Activated CD4-positive, alpha-beta T cell treated with anti-CD3 and anti-CD28 coated beads for 36 hours (primary cell): ENCODE measurements at regions of chr9 and their contacts with region 1.

Region 1: GRCh38 chr9:34989003-34989945 is at the start of gene DNAJB5:
- DNase-seq: peak; percentile 98
- ATAC-seq: peak; percentile 88
- H3K4me3 Mint-ChIP-seq: peak within 1 kb of the TSS; percentile 78
- H3K27ac Mint-ChIP-seq: peak within 1 kb of the TSS; percentile 94
- H3K4me1 Mint-ChIP-seq: peaks cover 82% of the 10 kb centered on the region
- H3K27me3 Mint-ChIP-seq: no peaks in the 10 kb centered on the region
- total RNA-seq, gene DNAJB5: 10.3 to 11.3 TPM

Region 2: GRCh38 chr9:34611829-34612630 is 377.2 kb before region 1 on chr9 and contains the start of gene RPP25L:
- CTCF ChIA-PET with region 1: no interaction called
- POLR2A ChIA-PET with region 1: no interaction called
- intact Hi-C with region 1: loop called in 1 of 2 experiments (anchors 2 kb)
- DNase-seq: peak; percentile 91
- ATAC-seq: peak; percentile 97
- H3K4me3 Mint-ChIP-seq: peak within 1 kb of the TSS; percentile 86
- H3K27ac Mint-ChIP-seq: peak within 1 kb of the TSS; percentile 93
- H3K4me1 Mint-ChIP-seq: peaks cover 16% of the 10 kb centered on the region
- H3K27me3 Mint-ChIP-seq: no peaks in the 10 kb centered on the region
- total RNA-seq, gene RPP25L: 29.3 to 35.2 TPM

Region 3: GRCh38 chr9:34665381-34666250 is 323.7 kb before region 1 on chr9:
- CTCF ChIA-PET with region 1: interaction called, 3 read pairs
- POLR2A ChIA-PET with region 1: no interaction called
- intact Hi-C with region 1: loop called in 1 of 2 experiments (anchors 1 kb)
- DNase-seq: peak; percentile 93
- ATAC-seq: peak; percentile 75
- H3K4me3 Mint-ChIP-seq: peak overlapping the region; percentile 77
- H3K27ac Mint-ChIP-seq: peak overlapping the region; percentile 87
- H3K4me1 Mint-ChIP-seq: peaks cover 33% of the 10 kb centered on the region
- H3K27me3 Mint-ChIP-seq: no peaks in the 10 kb centered on the region

Region 4: GRCh38 chr9:34899535-34900158 is 89.6 kb before region 1 on chr9:
- CTCF ChIA-PET with region 1: interaction called, 43 read pairs
- POLR2A ChIA-PET with region 1: no interaction called
- intact Hi-C with region 1: loop called (anchors 1 kb)
- DNase-seq: peak; percentile 90
- ATAC-seq: peak; percentile 100
- H3K4me3 Mint-ChIP-seq: no peak overlapping the region
- H3K27ac Mint-ChIP-seq: no peak overlapping the region
- H3K4me1 Mint-ChIP-seq: no peaks in the 10 kb centered on the region
- H3K27me3 Mint-ChIP-seq: peaks cover 30% of the 10 kb centered on the region

Region 5: GRCh38 chr9:35071814-35072460 is 82.7 kb after region 1 on chr9:
- CTCF ChIA-PET with region 1: interaction called, 4 read pairs
- POLR2A ChIA-PET with region 1: no interaction called
- intact Hi-C with region 1: loop called (anchors 1 kb)
- DNase-seq: peak; percentile 83
- ATAC-seq: peak; percentile 47
- H3K4me3 Mint-ChIP-seq: peak overlapping the region; percentile 91
- H3K27ac Mint-ChIP-seq: peak overlapping the region; percentile 95
- H3K4me1 Mint-ChIP-seq: peaks cover 56% of the 10 kb centered on the region
- H3K27me3 Mint-ChIP-seq: no peaks in the 10 kb centered on the region

Region 6: DNA sequence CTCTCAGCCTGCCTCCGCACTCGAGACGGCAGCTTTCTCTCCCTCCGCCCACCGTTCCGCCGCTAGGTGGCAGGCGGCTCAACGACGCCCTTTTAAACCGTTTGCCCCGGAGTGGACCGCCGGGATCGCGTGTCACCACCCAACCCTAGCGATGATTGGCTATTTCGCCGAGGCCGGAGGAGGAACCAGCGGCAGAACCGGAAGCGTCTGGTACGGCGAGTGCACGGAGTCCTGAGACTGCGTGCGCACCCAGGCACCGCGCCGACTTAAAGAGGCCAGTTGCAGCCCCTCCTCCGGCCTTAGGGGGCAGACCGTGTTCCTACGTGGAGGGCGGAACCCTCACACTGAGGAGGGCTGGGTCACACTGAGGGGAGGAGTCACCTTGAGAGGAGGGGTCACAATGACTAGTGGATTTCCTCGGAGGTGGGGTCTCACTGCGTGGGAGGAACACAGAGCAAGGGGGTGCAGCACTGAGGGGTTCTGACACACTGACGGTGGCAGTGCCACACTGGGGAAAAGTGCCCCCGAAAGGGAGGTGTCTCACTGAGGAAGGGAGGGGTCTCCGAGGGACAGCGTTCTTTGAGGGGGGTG is 614.8 kb after region 1 on chr9:
- CTCF ChIA-PET with region 1: no interaction called
- POLR2A ChIA-PET with region 1: no interaction called
- intact Hi-C with region 1: loop called in 1 of 2 experiments (anchors 1 kb)
- DNase-seq: peak; percentile 100
- ATAC-seq: peak; percentile 93
- H3K4me3 Mint-ChIP-seq: peak overlapping the region; percentile 83
- H3K27ac Mint-ChIP-seq: peak overlapping the region; percentile 96
- H3K4me1 Mint-ChIP-seq: peaks cover 23% of the 10 kb centered on the region
- H3K27me3 Mint-ChIP-seq: no peaks in the 10 kb centered on the region

Region 7: DNA sequence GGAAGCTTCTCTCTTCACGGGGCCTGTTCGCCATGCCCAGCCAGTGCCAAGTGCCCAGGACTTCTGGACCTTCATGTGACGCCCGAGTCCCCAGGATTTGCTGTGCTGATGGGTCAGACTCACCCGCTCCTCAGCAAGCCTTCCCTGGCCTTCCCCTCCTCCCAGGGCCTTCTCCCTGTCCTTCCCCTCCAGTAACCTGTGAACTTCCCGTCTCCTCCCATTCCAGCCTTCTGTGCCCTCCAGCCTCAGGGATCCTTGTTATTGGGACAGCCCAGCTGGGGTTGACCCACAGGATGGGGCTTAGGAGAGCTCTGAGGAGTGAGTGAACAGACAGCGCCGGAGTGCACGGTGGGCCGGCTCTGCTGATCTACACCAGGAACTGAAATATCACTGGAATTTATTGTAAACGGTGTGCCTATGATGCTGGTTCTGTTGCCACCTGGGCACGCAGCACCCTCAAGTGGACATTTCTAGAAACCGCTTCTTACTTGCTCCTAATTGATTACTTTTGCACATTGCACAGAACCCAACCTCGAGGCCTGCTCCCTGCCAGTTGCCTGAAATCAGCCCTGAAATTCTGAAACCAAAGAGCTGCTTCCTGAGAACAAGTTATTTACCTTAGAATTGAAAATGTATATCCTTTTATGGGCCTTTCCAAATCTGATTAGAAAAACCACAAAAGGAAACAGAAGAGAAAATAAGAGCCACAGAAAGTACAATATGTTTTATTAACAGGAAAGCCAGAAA is 921.5 kb after region 1 on chr9:
- CTCF ChIA-PET with region 1: no interaction called
- POLR2A ChIA-PET with region 1: no interaction called
- intact Hi-C with region 1: no loop called
- DNase-seq: peak; percentile 71
- ATAC-seq: peak; percentile 75
- H3K4me3 Mint-ChIP-seq: no peak overlapping the region
- H3K27ac Mint-ChIP-seq: peak overlapping the region; percentile 80
- H3K4me1 Mint-ChIP-seq: peaks cover 55% of the 10 kb centered on the region
- H3K27me3 Mint-ChIP-seq: no peaks in the 10 kb centered on the region